ENCODE measurements at regions of chr5 and their contacts with region 1.

Region 1: DNA sequence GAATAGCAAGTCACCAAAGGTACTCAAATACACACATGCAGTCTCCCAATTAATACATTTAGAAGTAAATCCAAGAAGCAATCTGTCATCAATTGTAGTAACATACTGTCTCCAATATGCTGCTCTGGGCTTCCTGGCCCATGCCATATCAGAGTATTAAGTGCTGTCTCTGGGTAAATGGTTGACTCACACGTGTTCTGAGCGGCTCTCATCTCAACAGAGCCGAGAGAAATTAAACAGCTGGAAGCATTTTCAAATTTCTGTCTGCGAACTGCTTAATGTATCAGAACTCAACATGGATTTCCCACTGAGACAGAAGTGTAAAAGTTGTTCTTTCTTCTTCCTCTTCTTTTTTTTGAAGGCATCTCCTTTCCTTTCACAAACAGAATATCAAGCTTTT is 247.3 kb upstream of the TAS2R1 start:
- DNase-seq: no peak
- H3K4me3 ChIP-seq: no peak overlapping the region
- H3K27me3 ChIP-seq: no peaks in the 10 kb centered on the region
- CTCF ChIP-seq: no peak

Region 2: DNA sequence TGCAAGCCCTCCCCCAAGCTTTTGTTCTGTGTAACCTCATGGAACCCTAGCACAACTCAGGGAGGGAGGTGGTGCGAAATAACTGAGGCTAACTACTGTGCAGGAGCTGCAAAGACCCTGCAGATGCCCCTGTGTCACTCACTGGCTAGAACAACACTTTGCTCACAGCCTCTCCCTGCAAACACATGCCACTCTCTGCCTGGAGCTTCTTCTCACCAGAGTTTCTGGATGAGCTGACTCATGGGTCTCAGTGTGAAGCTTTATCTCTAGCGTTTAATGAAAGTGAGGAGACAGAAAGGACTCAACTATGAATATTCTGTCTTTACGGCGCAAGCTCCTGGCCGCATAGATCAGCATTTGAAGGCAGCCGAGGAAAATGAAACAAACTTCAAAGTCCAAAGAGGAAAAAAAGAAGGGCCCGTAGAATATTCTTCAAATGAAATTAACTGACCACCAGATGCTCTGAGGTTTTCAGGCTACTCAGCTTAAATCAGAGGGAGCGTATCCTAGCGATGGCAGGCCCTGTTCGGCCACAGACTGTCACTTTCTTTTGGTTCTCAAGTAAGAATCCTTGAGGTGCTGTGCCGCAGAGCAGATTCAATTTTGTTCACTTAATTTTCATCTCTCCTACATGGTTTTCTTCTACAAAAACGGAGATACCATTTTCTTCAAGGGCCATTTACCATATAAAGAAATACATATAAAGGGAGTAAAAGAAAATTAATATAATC is 169.6 kb before region 1 on chr5:
- CTCF ChIA-PET with region 1: no interaction called
- POLR2A ChIA-PET with region 1: interaction called, 13 read pairs
- DNase-seq: no peak
- H3K4me3 ChIP-seq: no peak overlapping the region
- H3K27me3 ChIP-seq: no peaks in the 10 kb centered on the region
- CTCF ChIP-seq: no peak